PC-3 (cell line): ENCODE measurements at regions of chr3 and their contacts with region 1.

Region 1: GRCh38 chr3:81302045-81302444 is 459.4 kb downstream of the GBE1 start:
- DNase-seq: peak; percentile 68
- ATAC-seq: peak; percentile 64
- H3K4me3 ChIP-seq: no peak overlapping the region
- H3K27ac ChIP-seq: no peak overlapping the region
- H3K4me1 ChIP-seq: peaks cover 20% of the 10 kb centered on the region
- H3K27me3 ChIP-seq: no peaks in the 10 kb centered on the region
- CTCF ChIP-seq: peak; percentile 77

Region 2: GRCh38 chr3:81279481-81280273 is 22.4 kb before region 1 on chr3:
- CTCF ChIA-PET with region 1: no interaction called
- POLR2A ChIA-PET with region 1: no interaction called
- intact Hi-C with region 1: loop called (anchors 2 kb)
- DNase-seq: peak; percentile 67
- ATAC-seq: peak; percentile 73
- H3K4me3 ChIP-seq: peak overlapping the region; percentile 32; the same call in 1 of the 2 replicates
- H3K27ac ChIP-seq: peak overlapping the region; percentile 27
- H3K4me1 ChIP-seq: peaks cover 25% of the 10 kb centered on the region
- H3K27me3 ChIP-seq: no peaks in the 10 kb centered on the region
- CTCF ChIP-seq: no peak

Region 3: GRCh38 chr3:81419228-81419627 is 117.2 kb after region 1 on chr3:
- CTCF ChIA-PET with region 1: no interaction called
- POLR2A ChIA-PET with region 1: no interaction called
- intact Hi-C with region 1: loop called (anchors 5 kb)
- DNase-seq: peak; percentile 54
- ATAC-seq: peak; percentile 63; the same call in 1 of the 2 replicates
- H3K4me3 ChIP-seq: no peak overlapping the region
- H3K27ac ChIP-seq: no peak overlapping the region
- H3K4me1 ChIP-seq: no peaks in the 10 kb centered on the region
- H3K27me3 ChIP-seq: no peaks in the 10 kb centered on the region
- CTCF ChIP-seq: peak; percentile 77

Region 4: GRCh38 chr3:81581966-81582599 is 280.0 kb after region 1 on chr3:
- CTCF ChIA-PET with region 1: no interaction called
- POLR2A ChIA-PET with region 1: no interaction called
- intact Hi-C with region 1: loop called (anchors 5 kb)
- DNase-seq: peak; percentile 78
- ATAC-seq: peak; percentile 94
- H3K4me3 ChIP-seq: no peak overlapping the region
- H3K27ac ChIP-seq: no peak overlapping the region
- H3K4me1 ChIP-seq: no peaks in the 10 kb centered on the region
- H3K27me3 ChIP-seq: no peaks in the 10 kb centered on the region
- CTCF ChIP-seq: peak; percentile 92